PC-3 (cell line): ENCODE measurements at regions of chr11 and their contacts with region 1.

Region 1: DNA sequence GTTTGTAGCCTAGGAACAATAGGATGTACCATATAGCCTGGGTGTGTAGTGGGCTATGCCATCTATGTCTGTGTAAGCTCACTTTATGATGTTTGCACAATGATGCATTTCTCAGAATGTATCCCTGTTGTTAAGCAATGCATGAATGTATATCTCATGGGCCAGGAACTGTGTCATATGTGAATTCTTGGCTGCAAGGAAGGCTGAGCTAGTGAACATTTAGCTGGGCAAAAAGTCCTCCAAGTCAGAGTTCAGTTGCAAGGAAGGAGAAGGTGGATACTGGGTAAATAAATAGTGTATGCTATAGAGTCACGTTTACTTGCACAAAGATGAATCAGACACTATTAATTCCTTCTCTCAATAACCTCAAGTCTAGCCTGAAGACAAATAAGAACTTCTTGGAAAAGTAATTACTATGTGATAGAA is 136.1 kb downstream of the EHF start:
- DNase-seq: peak; percentile 98
- ATAC-seq: peak; percentile 94
- H3K4me3 ChIP-seq: no peak overlapping the region
- H3K27ac ChIP-seq: peak overlapping the region; percentile 98
- H3K4me1 ChIP-seq: peaks cover 28% of the 10 kb centered on the region
- H3K27me3 ChIP-seq: no peaks in the 10 kb centered on the region
- CTCF ChIP-seq: no peak

Region 2: DNA sequence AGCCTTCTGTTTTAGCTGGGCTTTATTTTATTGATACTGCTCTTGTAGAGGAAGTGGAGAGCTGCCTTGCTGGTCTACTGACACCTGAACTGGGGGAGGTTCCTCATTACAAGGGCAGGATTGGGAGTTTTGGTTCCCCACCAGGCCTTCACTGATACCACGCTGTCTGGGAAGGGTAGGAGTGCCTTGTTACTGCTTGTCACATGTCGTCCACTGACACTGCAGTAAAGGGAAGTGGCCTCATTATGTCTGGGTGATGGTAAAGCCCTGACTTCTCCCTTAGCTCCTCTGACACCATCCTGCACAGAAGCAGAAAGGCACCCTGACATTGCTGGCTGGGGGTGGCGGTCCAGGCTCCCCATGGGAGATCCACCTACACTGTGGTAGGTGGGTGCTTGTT is 204.8 kb before region 1 on chr11:
- CTCF ChIA-PET with region 1: no interaction called
- POLR2A ChIA-PET with region 1: no interaction called
- intact Hi-C with region 1: no loop called
- DNase-seq: no peak
- ATAC-seq: no peak
- H3K4me3 ChIP-seq: no peak overlapping the region
- H3K27ac ChIP-seq: no peak overlapping the region
- H3K4me1 ChIP-seq: no peaks in the 10 kb centered on the region
- H3K27me3 ChIP-seq: no peaks in the 10 kb centered on the region
- CTCF ChIP-seq: no peak

Region 3: GRCh38 chr11:34585735-34586487 is 171.1 kb before region 1 on chr11:
- CTCF ChIA-PET with region 1: interaction called, 6 read pairs
- POLR2A ChIA-PET with region 1: no interaction called
- intact Hi-C with region 1: loop called (anchors 2 kb)
- DNase-seq: peak; percentile 84
- ATAC-seq: peak; percentile 64
- H3K4me3 ChIP-seq: peak overlapping the region; percentile 19; the same call in 1 of the 2 replicates
- H3K27ac ChIP-seq: peak overlapping the region; percentile 60
- H3K4me1 ChIP-seq: peaks cover 25% of the 10 kb centered on the region
- H3K27me3 ChIP-seq: no peaks in the 10 kb centered on the region
- CTCF ChIP-seq: peak; percentile 83

Region 4: DNA sequence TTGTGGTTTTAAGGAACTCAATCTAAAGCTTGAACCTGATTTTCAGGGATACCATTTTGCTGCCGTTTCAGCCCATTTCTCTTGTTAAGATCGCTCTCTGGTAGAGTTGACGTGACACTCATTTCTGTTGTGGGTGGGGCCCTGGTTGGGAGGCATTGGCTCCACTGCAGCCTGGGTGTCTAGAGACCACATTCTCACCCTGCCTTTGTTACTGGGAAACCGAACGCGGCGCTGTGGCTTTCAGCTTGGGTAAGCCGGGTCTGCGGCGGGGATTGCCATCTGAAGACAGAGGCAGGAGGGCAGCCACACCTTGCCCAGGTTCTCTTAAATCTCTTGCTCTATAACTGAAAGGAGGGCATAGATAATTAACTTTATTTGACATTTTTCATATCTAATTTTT is 133.0 kb before region 1 on chr11:
- CTCF ChIA-PET with region 1: no interaction called
- POLR2A ChIA-PET with region 1: no interaction called
- intact Hi-C with region 1: no loop called
- DNase-seq: no peak
- ATAC-seq: no peak
- H3K4me3 ChIP-seq: peak overlapping the region; percentile 66
- H3K27ac ChIP-seq: no peak overlapping the region
- H3K4me1 ChIP-seq: peaks cover 44% of the 10 kb centered on the region
- H3K27me3 ChIP-seq: no peaks in the 10 kb centered on the region
- CTCF ChIP-seq: no peak

Region 5: DNA sequence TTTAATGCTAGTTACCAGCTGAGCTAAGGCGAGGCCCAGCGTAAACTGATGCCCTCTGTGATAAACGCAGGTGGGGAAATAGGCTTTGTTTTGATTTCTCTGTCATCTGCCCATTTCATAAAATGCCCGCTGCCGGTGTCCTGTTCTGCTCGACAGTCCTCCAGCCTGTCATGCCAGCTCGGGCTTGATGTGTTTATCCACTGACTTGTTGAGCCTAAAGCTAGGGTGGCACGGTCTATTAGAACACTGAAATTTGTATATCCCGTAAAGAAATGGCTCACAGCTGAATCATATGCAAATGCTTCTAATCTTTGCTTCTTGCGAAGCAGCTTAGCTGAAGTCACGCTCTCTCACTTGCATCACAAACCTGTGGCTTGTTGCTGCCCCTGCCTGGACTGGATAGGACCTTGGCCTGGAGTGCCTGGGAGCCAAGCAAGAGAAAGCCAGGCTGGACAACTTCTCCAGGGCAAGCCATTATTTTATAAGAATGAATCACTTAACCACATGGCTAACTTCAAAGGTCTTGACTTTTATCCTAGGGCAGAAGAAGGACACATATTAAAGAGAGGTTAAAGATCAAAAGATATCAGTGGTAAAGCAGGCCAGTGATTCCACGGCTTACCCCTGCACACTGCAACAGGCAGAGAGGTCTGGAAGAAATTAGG is 103.1 kb before region 1 on chr11:
- CTCF ChIA-PET with region 1: interaction called, 9 read pairs
- POLR2A ChIA-PET with region 1: interaction called, 5 read pairs
- intact Hi-C with region 1: loop called (anchors 1 kb)
- DNase-seq: peak; percentile 97
- ATAC-seq: peak; percentile 86
- H3K4me3 ChIP-seq: peak overlapping the region; percentile 3; the same call in 1 of the 2 replicates
- H3K27ac ChIP-seq: peak overlapping the region; percentile 99
- H3K4me1 ChIP-seq: peaks cover 52% of the 10 kb centered on the region
- H3K27me3 ChIP-seq: no peaks in the 10 kb centered on the region
- CTCF ChIP-seq: peak; percentile 49; the same call in 1 of the 2 replicates

Region 6: GRCh38 chr11:34706709-34707461 is 50.2 kb before region 1 on chr11:
- CTCF ChIA-PET with region 1: no interaction called
- POLR2A ChIA-PET with region 1: no interaction called
- intact Hi-C with region 1: no loop called
- DNase-seq: no peak
- ATAC-seq: no peak
- H3K4me3 ChIP-seq: no peak overlapping the region
- H3K27ac ChIP-seq: no peak overlapping the region
- H3K4me1 ChIP-seq: no peaks in the 10 kb centered on the region
- H3K27me3 ChIP-seq: no peaks in the 10 kb centered on the region
- CTCF ChIP-seq: no peak

Region 7: GRCh38 chr11:34731603-34732002 is 25.4 kb before region 1 on chr11:
- CTCF ChIA-PET with region 1: no interaction called
- POLR2A ChIA-PET with region 1: no interaction called
- intact Hi-C with region 1: loop called (anchors 2 kb)
- DNase-seq: no peak
- ATAC-seq: no peak
- H3K4me3 ChIP-seq: no peak overlapping the region
- H3K27ac ChIP-seq: no peak overlapping the region
- H3K4me1 ChIP-seq: peaks cover 15% of the 10 kb centered on the region
- H3K27me3 ChIP-seq: no peaks in the 10 kb centered on the region
- CTCF ChIP-seq: no peak

Region 8: GRCh38 chr11:34890812-34891211 is 133.8 kb after region 1 on chr11:
- CTCF ChIA-PET with region 1: no interaction called
- POLR2A ChIA-PET with region 1: no interaction called
- intact Hi-C with region 1: loop called (anchors 1 kb)
- DNase-seq: peak; percentile 78
- ATAC-seq: peak; percentile 68; the same call in 1 of the 2 replicates
- H3K4me3 ChIP-seq: no peak overlapping the region
- H3K27ac ChIP-seq: peak overlapping the region; percentile 37
- H3K4me1 ChIP-seq: peaks cover 17% of the 10 kb centered on the region
- H3K27me3 ChIP-seq: no peaks in the 10 kb centered on the region
- CTCF ChIP-seq: peak; percentile 72